ENCODE measurements at regions of chr14 and their contacts with region 1.

Region 1: DNA sequence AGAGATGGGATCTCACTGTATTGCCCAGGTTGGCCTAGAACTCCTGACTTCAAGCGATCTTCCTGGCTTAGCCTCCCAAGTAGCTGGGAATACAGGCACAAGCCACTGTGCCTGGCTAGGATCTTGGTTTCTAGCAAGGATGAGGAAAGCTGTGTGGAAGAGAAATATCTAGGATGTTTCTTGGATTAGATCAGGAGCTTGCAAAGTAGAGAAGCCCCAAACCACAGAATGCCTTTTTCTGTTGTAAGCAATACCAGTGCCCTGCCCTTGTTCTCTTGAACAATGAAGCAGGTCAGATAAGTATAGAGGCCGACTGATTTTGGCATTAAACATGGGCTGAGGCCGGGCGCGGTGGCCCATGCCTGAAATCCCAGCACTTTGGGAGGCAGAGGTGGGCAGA is 44.3 kb upstream of the STRN3 start:
- DNase-seq: no peak
- ATAC-seq: peak; percentile 66
- H3K4me3 ChIP-seq: no peak overlapping the region
- H3K27ac ChIP-seq: no peak overlapping the region
- H3K4me1 ChIP-seq: peaks cover 7% of the 10 kb centered on the region
- H3K27me3 ChIP-seq: no peaks in the 10 kb centered on the region
- CTCF ChIP-seq: no peak

Region 2: DNA sequence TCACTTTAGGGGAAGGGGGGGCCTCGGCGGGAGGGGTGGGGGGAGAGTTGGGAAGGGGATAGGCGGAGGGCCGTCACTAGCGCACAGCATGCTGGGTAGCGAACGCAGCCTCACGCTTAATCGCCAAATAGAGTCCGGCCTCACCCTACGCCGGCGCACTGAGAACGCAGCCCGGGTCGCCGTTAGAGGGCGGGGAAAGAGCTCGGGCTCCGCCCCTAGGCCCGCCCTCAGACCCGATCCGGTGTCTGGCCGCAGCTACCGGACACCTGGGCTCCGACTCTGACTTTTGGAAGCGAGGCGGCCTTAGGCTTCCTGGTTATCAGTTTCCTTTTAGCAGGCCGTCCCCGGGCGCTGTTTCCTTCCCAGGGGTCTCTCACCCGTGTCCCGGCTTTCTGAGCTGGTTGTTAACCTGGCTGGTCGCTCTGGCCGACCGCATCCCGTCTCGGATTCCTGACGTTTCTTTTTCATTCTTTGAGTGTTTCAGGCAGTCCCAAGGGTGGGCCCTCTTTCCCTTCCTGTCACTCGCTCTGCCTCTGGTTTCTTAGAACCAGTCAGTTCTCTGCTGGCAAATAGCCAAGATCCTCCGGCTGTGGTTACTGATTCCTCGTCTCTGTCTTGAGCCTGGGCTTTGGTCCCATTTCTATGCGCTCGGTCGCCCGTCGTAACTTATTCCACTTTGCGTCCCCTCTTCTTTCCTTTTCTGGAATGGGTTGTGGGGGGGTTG is 43.9 kb before region 1 on chr14:
- intact Hi-C with region 1: loop called (anchors 10 kb)
- DNase-seq: peak; percentile 98
- ATAC-seq: peak; percentile 98
- H3K4me3 ChIP-seq: peak overlapping the region; percentile 78
- H3K27ac ChIP-seq: peak overlapping the region; percentile 97
- H3K4me1 ChIP-seq: peaks cover 22% of the 10 kb centered on the region
- H3K27me3 ChIP-seq: no peaks in the 10 kb centered on the region
- CTCF ChIP-seq: no peak